PC-3 (cell line): ENCODE measurements at regions of chr10 and their contacts with region 1.

Region 1: GRCh38 chr10:63157845-63158624 is 24.9 kb downstream of the NRBF2 start:
- DNase-seq: peak; percentile 99
- ATAC-seq: peak; percentile 80
- H3K4me3 ChIP-seq: no peak overlapping the region
- H3K27ac ChIP-seq: peak overlapping the region; percentile 17
- H3K4me1 ChIP-seq: peaks cover 7% of the 10 kb centered on the region; the same call in 1 of the 2 replicates
- H3K27me3 ChIP-seq: no peaks in the 10 kb centered on the region
- CTCF ChIP-seq: peak; percentile 100

Region 2: GRCh38 chr10:62554632-62555199 is 603.3 kb before region 1 on chr10:
- CTCF ChIA-PET with region 1: no interaction called
- POLR2A ChIA-PET with region 1: interaction called, 3 read pairs
- intact Hi-C with region 1: loop called (anchors 1 kb)
- DNase-seq: peak; percentile 94
- ATAC-seq: peak; percentile 94
- H3K4me3 ChIP-seq: no peak overlapping the region
- H3K27ac ChIP-seq: no peak overlapping the region
- H3K4me1 ChIP-seq: no peaks in the 10 kb centered on the region
- H3K27me3 ChIP-seq: no peaks in the 10 kb centered on the region
- CTCF ChIP-seq: peak; percentile 99

Region 3: DNA sequence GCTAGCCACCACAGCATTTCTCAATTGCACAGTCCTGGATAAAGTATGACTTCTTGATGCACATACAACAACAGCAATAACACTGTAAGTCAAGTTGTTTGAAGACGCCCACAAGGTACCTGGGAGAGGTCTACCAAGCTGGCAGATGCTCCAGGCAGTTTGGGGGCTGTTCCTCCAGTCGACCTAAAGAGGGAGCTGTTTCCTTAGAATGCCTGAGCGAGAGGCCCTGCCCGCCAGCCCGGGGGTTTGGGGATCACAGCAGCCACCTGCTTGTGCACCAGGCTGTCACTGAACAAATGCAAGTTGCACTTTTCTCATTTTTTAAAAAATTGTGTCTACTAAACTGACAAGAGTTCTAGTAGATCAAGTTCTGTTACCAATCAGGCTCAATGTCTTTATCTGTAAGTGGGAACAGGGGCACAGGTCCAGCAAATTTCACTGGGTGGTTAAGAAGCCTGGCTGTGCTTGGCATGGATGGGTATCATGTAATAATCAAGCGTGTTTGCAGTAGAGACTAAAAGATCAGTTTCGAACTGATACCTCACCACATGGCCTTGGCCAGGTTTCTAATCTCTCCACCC is 547.3 kb before region 1 on chr10:
- CTCF ChIA-PET with region 1: no interaction called
- POLR2A ChIA-PET with region 1: no interaction called
- intact Hi-C with region 1: loop called (anchors 1 kb)
- DNase-seq: peak; percentile 99
- ATAC-seq: peak; percentile 72
- H3K4me3 ChIP-seq: no peak overlapping the region
- H3K27ac ChIP-seq: no peak overlapping the region
- H3K4me1 ChIP-seq: peaks cover 29% of the 10 kb centered on the region
- H3K27me3 ChIP-seq: no peaks in the 10 kb centered on the region
- CTCF ChIP-seq: peak; percentile 100

Region 4: DNA sequence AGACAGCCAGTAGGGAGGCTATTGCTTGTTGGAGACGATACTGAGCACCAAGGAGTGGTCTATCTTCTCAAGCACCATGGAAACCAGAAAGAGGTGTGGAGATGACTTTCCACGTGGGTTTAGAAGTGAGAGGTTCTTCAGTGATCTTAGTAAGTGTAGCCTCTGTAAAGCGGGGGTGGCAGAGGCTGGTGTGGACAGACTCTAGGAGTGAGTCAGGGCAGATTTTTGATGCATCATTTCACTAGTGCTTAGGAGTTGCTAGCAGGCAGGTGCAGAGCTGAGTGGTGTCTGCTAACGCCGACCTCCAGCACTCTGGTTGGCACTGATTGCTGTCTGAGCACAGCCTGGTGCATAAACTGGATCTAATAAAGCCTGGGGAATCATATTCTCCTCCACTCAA is 431.9 kb before region 1 on chr10:
- CTCF ChIA-PET with region 1: no interaction called
- POLR2A ChIA-PET with region 1: no interaction called
- intact Hi-C with region 1: no loop called
- DNase-seq: peak; percentile 86
- ATAC-seq: peak; percentile 72
- H3K4me3 ChIP-seq: no peak overlapping the region
- H3K27ac ChIP-seq: peak overlapping the region; percentile 13
- H3K4me1 ChIP-seq: peaks cover 21% of the 10 kb centered on the region
- H3K27me3 ChIP-seq: no peaks in the 10 kb centered on the region
- CTCF ChIP-seq: no peak

Region 5: GRCh38 chr10:63083904-63084689 is 73.9 kb before region 1 on chr10:
- CTCF ChIA-PET with region 1: interaction called, 4 read pairs
- POLR2A ChIA-PET with region 1: no interaction called
- intact Hi-C with region 1: loop called (anchors 2 kb)
- DNase-seq: peak; percentile 99
- ATAC-seq: peak; percentile 95
- H3K4me3 ChIP-seq: no peak overlapping the region
- H3K27ac ChIP-seq: no peak overlapping the region
- H3K4me1 ChIP-seq: peaks cover 14% of the 10 kb centered on the region
- H3K27me3 ChIP-seq: no peaks in the 10 kb centered on the region
- CTCF ChIP-seq: peak; percentile 100

Region 6: DNA sequence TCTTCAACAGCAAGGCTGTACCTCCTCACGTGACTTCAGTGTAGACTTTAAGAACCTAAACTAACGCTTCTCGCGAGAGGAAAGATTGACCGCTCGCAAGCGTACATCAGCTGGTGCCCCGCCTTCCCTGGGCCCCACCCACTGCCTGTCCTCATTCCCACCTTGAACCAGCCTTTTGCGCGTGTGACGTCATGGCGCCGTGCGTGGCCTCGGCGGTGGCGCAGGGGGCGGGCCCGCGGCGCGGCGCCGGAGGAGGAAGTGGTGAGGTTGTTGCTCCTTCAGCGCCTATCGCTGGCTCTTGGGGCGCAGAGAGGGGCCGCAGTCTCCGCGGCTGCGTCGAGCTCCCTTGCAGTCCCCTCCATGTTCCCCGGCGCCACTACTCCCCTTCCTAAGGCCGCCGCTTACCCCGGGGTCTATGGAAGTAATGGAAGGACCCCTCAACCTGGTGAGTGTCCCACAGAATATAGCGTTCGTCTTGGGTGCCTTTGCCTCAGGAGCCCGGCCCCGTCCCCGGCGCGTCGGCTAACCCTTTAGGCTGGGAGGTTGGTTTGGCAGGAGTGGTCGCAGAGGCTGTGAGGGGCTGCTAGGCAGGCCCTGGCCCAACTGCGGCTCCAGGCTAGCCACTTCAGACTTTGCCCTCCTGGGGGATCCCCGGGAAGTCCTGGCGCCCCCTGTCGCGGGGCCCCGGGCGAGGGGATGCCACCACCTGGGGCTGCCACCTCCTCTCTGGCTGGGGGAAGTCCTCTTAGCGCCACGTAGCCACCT is 24.8 kb before region 1 on chr10 and contains the start of gene NRBF2:
- CTCF ChIA-PET with region 1: interaction called, 4 read pairs
- POLR2A ChIA-PET with region 1: interaction called, 3 read pairs
- intact Hi-C with region 1: loop called (anchors 1 kb)
- DNase-seq: peak; percentile 100
- ATAC-seq: peak; percentile 95
- H3K4me3 ChIP-seq: peak within 1 kb of the TSS; percentile 75
- H3K27ac ChIP-seq: peak within 1 kb of the TSS; percentile 33
- H3K4me1 ChIP-seq: peaks cover 26% of the 10 kb centered on the region
- H3K27me3 ChIP-seq: no peaks in the 10 kb centered on the region
- CTCF ChIP-seq: peak; percentile 86
- total RNA-seq, gene NRBF2: 43.4 and 44.4 TPM in 2 replicates